Activated B cell treated with CpG ODN at 0.5 μM for 24 hours (primary cell): ENCODE measurements at regions of chr1 and their contacts with region 1.

Region 1: DNA sequence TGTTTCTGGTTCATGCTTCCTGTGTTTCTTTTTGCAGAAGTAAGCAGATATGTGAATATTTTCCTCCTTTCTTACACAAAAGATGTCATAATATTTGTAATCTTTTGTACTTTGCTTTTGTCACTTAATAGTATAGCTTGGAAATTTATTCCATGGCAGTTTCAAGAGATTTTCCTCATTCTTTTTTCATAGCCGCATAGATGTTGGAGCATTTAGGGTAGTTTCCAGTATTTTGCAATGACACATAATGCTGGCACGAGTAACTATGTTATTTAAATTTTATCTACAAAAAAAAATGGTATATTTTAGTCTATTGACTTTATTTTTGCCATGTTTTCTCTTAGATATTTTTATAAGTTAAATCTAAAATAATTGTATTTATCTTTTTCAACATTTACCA is 40.7 kb downstream of the AGO3 start:
- DNase-seq: no peak
- ATAC-seq: no peak
- H3K4me3 Mint-ChIP-seq: no peak overlapping the region
- H3K27ac Mint-ChIP-seq: no peak overlapping the region
- H3K4me1 Mint-ChIP-seq: no peaks in the 10 kb centered on the region
- H3K27me3 Mint-ChIP-seq: no peaks in the 10 kb centered on the region
- CTCF ChIP-seq: no peak

Region 2: GRCh38 chr1:35988237-35988636 is 16.6 kb after region 1 on chr1:
- CTCF ChIA-PET with region 1: no interaction called
- POLR2A ChIA-PET with region 1: no interaction called
- intact Hi-C with region 1: loop called (anchors 1 kb)
- DNase-seq: no peak
- ATAC-seq: no peak
- H3K4me3 Mint-ChIP-seq: no peak overlapping the region
- H3K27ac Mint-ChIP-seq: no peak overlapping the region
- H3K4me1 Mint-ChIP-seq: no peaks in the 10 kb centered on the region
- H3K27me3 Mint-ChIP-seq: no peaks in the 10 kb centered on the region
- CTCF ChIP-seq: no peak